ENCODE measurements at regions of chr1 and their contacts with region 1.

Region 1: DNA sequence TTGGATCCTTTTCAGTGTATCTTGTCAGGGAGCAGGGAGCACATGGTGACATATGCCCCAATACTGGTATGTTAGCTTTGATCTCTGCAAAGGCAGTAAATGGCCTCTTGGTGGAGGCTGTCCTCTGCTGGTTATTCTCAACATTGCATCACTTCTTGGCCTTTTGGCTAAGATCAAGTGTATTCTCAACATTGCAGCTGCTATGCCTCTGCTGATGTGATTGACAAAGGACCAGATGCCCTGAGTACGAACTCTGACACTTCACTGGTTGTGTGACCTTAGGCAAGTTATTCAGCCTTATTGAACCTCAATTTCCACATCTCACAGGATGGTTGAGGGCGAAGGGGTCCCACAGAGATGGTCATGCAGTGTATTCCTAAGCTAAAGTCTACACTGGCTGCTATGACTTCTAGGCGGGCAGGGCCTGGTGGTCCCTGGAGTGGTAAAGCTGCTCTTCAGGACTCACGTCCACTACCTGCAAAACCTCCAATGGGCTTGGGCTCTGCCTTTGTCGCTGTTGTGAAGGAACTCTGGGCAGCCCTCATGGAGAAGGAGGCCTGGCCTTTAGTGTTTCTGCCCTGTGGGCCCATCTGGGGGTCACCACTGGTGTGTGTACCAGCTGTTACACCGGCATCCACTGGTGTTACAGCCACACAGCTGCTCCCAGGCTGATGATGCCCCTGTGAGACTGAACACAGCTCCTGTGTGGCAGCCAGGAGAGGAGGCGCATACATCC is 64.8 kb downstream of the DNTTIP2 start:
- DNase-seq: peak; percentile 55 to 92 (median 71)
- H3K4me3 ChIP-seq: no peak overlapping the region
- H3K27ac ChIP-seq: no peak overlapping the region
- H3K4me1 ChIP-seq: peaks cover 6 to 31% of the 10 kb centered on the region in 2 donors
- H3K27me3 ChIP-seq: no peaks in the 10 kb centered on the region
- CTCF ChIP-seq: peak; percentile 90 to 100 (median 99)
- POLR2A ChIP-seq: no peak

Region 2: DNA sequence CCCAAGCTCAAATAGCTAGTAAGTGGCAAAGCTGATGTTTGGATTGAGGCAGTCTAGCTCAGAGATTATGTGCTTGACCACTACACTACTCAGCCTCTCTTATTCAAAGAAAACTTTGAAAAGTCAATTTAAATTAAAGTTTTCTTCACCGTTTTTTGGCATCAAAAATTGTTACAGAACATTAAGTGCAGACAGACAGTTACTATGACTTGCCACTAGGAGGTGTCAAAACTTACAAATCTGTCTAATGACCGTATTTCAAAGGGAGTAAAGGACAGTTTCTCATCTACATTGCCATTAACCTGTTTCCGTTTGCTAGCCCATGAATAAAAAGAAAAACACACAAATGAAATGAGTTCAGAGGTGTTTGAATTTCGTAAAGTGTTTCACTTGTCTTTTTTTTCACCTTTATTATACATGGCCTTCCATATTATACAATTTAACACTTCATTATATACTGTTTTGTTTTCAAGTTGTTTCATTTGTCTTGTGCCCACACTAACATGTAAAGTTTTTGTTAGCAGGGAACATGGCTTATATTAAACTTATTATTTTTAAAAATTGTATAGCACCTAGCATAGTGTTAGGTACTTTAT is 792.6 kb before region 1 on chr1:
- intact Hi-C with region 1: no loop called
- DNase-seq: peak in 1 of 7 donors; percentile 11
- H3K4me3 ChIP-seq: no peak overlapping the region
- H3K27ac ChIP-seq: no peak overlapping the region
- H3K4me1 ChIP-seq: no peaks in the 10 kb centered on the region
- H3K27me3 ChIP-seq: no peaks in the 10 kb centered on the region
- CTCF ChIP-seq: peak; percentile 54 to 86 (median 72)
- POLR2A ChIP-seq: no peak

Region 3: GRCh38 chr1:93437976-93438605 is 376.1 kb before region 1 on chr1:
- intact Hi-C with region 1: loop called (anchors 10 kb)
- DNase-seq: no peak
- H3K4me3 ChIP-seq: no peak overlapping the region
- H3K27ac ChIP-seq: no peak overlapping the region
- H3K4me1 ChIP-seq: peaks cover 0 to 7% of the 10 kb centered on the region in 2 donors
- H3K27me3 ChIP-seq: no peaks in the 10 kb centered on the region
- CTCF ChIP-seq: peak; percentile 41 to 84 (median 72)
- POLR2A ChIP-seq: no peak

Region 4: DNA sequence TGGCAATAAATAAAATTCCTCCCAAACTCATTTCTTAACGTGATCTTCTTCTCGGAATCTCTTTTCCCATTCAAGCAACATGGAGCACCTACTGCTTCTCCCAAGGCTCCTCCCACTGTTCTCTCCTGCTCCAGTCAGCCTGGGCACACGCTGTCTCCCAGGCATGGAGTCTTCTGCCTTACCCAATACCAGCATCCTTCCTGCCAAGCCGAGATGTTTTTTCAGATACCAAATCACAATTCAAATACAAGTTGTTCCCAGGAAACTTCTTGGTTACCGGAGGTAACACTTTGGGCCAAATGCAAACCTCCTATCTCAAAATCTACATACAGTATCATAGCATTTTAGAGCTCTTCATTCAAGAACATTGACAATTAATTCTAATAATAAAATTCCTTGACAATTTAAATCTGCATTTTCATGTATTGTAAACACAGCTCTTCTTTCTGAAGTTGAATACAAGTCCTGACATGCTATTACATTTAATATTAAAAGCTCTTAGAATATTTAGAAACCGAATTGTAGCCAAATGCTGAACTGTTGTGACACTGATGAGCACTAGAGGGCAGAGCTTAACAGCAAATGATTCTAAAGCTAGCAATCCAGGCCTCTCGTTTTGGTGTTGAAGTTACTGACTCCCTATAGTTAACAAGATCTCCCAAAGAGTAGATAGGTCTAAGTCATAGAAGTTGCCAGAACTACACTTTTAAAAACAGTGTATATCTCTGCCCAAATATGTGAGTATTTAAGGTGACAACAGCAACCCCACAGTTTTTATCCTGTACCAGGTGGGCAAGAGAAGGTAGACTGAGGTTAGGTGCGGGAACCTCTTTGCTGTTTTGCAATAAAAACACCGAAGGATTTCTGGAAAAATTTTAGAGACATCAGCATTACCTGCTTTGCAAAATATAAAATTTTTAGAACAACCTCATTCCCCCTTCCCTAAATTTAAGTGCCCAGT is 184.8 kb before region 1 on chr1:
- intact Hi-C with region 1: loop called (anchors 2 kb)
- DNase-seq: peak in 5 of 7 donors; percentile 42 to 75 (median 64)
- H3K4me3 ChIP-seq: no peak overlapping the region
- H3K27ac ChIP-seq: peak overlapping the region in 1 of 5 donors; percentile 3
- H3K4me1 ChIP-seq: peaks cover 0 to 21% of the 10 kb centered on the region in 2 donors
- H3K27me3 ChIP-seq: no peaks in the 10 kb centered on the region
- CTCF ChIP-seq: peak; percentile 62 to 91 (median 90)
- POLR2A ChIP-seq: no peak

Region 5: GRCh38 chr1:93680757-93681550 is 133.3 kb before region 1 on chr1:
- intact Hi-C with region 1: loop called in 1 of 2 experiments (anchors 5 kb)
- DNase-seq: peak; percentile 88 to 96 (median 90)
- H3K4me3 ChIP-seq: peak overlapping the region; percentile 50 to 89 (median 72)
- H3K27ac ChIP-seq: peak overlapping the region; percentile 77 to 93 (median 83)
- H3K4me1 ChIP-seq: peaks cover 21 to 30% of the 10 kb centered on the region in 2 donors
- H3K27me3 ChIP-seq: no peaks in the 10 kb centered on the region
- CTCF ChIP-seq: peak; percentile 61 to 86 (median 78)
- POLR2A ChIP-seq: peak in 1 of 2 donors; percentile 86

Region 6: GRCh38 chr1:93692983-93693591 is 121.1 kb before region 1 on chr1:
- intact Hi-C with region 1: no loop called
- DNase-seq: no peak
- H3K4me3 ChIP-seq: no peak overlapping the region
- H3K27ac ChIP-seq: no peak overlapping the region
- H3K4me1 ChIP-seq: peaks cover 0 to 24% of the 10 kb centered on the region in 2 donors
- H3K27me3 ChIP-seq: no peaks in the 10 kb centered on the region
- CTCF ChIP-seq: no peak
- POLR2A ChIP-seq: no peak

Region 7: GRCh38 chr1:94362466-94363058 is 548.3 kb after region 1 on chr1:
- intact Hi-C with region 1: no loop called
- DNase-seq: no peak
- H3K4me3 ChIP-seq: no peak overlapping the region
- H3K27ac ChIP-seq: no peak overlapping the region
- H3K4me1 ChIP-seq: no peaks in the 10 kb centered on the region
- H3K27me3 ChIP-seq: no peaks in the 10 kb centered on the region
- CTCF ChIP-seq: no peak
- POLR2A ChIP-seq: no peak

Measured in adrenal gland (tissue), 19 donors.